CD8-positive, alpha-beta memory T cell (primary cell): ENCODE measurements at regions of chr9 and their contacts with region 1.

Region 1: GRCh38 chr9:35790385-35791296 is 750 bp upstream of the NPR2 start:
- DNase-seq: peak; percentile 31 to 70 (median 54)
- H3K4me3 ChIP-seq: no peak overlapping the region
- H3K4me3 Mint-ChIP-seq: no peak overlapping the region
- H3K27ac ChIP-seq: no peak overlapping the region
- H3K27ac Mint-ChIP-seq: peak overlapping the region in 3 of 8 donors; percentile 29 to 63 (median 46)
- H3K4me1 ChIP-seq: no peaks in the 10 kb centered on the region
- H3K4me1 Mint-ChIP-seq: peaks cover 7 to 9% (median 8%) of the 10 kb centered on the region in 3 donors
- H3K27me3 ChIP-seq: no peaks in the 10 kb centered on the region
- H3K27me3 Mint-ChIP-seq: no peaks in the 10 kb centered on the region

Region 2: GRCh38 chr9:35682520-35683315 is 107.9 kb before region 1 on chr9:
- CTCF ChIA-PET with region 1: no interaction called
- POLR2A ChIA-PET with region 1: no interaction called
- DNase-seq: no peak
- H3K4me3 ChIP-seq: no peak overlapping the region
- H3K4me3 Mint-ChIP-seq: peak overlapping the region in 1 of 7 donors; percentile 59
- H3K27ac ChIP-seq: no peak overlapping the region
- H3K27ac Mint-ChIP-seq: peak overlapping the region in 4 of 8 donors; percentile 13 to 84 (median 50)
- H3K4me1 ChIP-seq: no peaks in the 10 kb centered on the region
- H3K4me1 Mint-ChIP-seq: peaks cover 0 to 4% (median 3%) of the 10 kb centered on the region in 3 donors
- H3K27me3 ChIP-seq: no peaks in the 10 kb centered on the region
- H3K27me3 Mint-ChIP-seq: no peaks in the 10 kb centered on the region

Region 3: DNA sequence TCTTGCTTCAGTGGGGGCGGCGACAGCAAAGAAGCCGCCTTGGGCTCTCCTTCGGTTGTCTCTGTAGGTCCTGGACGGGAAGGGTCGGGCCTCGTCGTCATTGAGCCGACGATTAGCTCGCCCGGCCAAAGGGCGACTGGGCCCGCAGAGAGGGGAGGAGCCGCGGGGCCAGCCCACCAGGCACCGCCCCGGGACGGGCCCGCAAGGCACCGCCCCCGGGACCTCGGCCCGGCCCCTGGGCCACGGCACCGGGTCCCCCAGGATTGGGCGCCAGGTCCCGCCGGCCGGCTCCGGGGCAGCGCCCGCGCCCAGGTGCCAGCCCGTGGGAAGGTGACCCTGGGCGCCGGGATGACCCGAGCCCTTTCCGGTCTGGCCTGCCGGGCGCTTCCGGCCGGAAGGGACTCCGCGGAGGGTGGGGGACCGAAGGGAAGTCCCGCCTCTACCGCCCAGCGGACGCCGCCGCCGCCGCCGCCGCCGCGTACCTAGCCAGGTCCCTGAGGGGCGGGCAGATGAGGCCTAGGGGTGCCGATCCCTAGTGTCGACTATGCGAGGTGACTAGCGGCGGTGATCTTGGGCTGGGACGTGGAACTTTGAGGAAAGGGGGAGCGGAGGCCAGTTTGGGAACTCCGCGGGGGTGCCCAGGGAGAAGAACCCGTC is 41.7 kb before region 1 on chr9 and contains the starts of genes GBA2 and RGP1:
- CTCF ChIA-PET with region 1: interaction called, 16 read pairs
- POLR2A ChIA-PET with region 1: no interaction called
- DNase-seq: peak; percentile 59 to 79 (median 66)
- H3K4me3 ChIP-seq: peak within 1 kb of the TSS; percentile 88
- H3K4me3 Mint-ChIP-seq: peak within 1 kb of the TSS; percentile 91 to 98 (median 96)
- H3K27ac ChIP-seq: peak within 1 kb of the TSS; percentile 75
- H3K27ac Mint-ChIP-seq: peak within 1 kb of the TSS; percentile 83 to 98 (median 93)
- H3K4me1 ChIP-seq: peaks cover 38% of the 10 kb centered on the region
- H3K4me1 Mint-ChIP-seq: peaks cover 36 to 67% (median 44%) of the 10 kb centered on the region in 3 donors
- H3K27me3 ChIP-seq: no peaks in the 10 kb centered on the region
- H3K27me3 Mint-ChIP-seq: no peaks in the 10 kb centered on the region
- total RNA-seq, gene GBA2: 41.8 to 42.0 TPM
- total RNA-seq, gene RGP1: 19.9 to 21.9 TPM

Region 4: GRCh38 chr9:35826071-35826701 is 35.5 kb after region 1 on chr9:
- CTCF ChIA-PET with region 1: interaction called, 15 read pairs
- POLR2A ChIA-PET with region 1: no interaction called
- DNase-seq: peak in 2 of 5 donors; percentile 45 to 58
- H3K4me3 ChIP-seq: no peak overlapping the region
- H3K4me3 Mint-ChIP-seq: peak overlapping the region in 4 of 7 donors; percentile 55 to 69 (median 65)
- H3K27ac ChIP-seq: no peak overlapping the region
- H3K27ac Mint-ChIP-seq: peak overlapping the region in 5 of 8 donors; percentile 21 to 85 (median 28)
- H3K4me1 ChIP-seq: peaks cover 14% of the 10 kb centered on the region
- H3K4me1 Mint-ChIP-seq: peaks cover 22 to 31% (median 24%) of the 10 kb centered on the region in 3 donors
- H3K27me3 ChIP-seq: no peaks in the 10 kb centered on the region
- H3K27me3 Mint-ChIP-seq: no peaks in the 10 kb centered on the region

Region 5: GRCh38 chr9:35882263-35882848 is 91.7 kb after region 1 on chr9:
- CTCF ChIA-PET with region 1: interaction called, 50 read pairs
- POLR2A ChIA-PET with region 1: no interaction called
- DNase-seq: peak; percentile 57 to 84 (median 74)
- H3K4me3 ChIP-seq: no peak overlapping the region
- H3K4me3 Mint-ChIP-seq: no peak overlapping the region
- H3K27ac ChIP-seq: no peak overlapping the region
- H3K27ac Mint-ChIP-seq: no peak overlapping the region
- H3K4me1 ChIP-seq: no peaks in the 10 kb centered on the region
- H3K4me1 Mint-ChIP-seq: no peaks in the 10 kb centered on the region
- H3K27me3 ChIP-seq: no peaks in the 10 kb centered on the region
- H3K27me3 Mint-ChIP-seq: peaks cover 11 to 19% of the 10 kb centered on the region in 2 donors